ENCODE measurements at regions of chrX and their contacts with region 1.

Region 1: DNA sequence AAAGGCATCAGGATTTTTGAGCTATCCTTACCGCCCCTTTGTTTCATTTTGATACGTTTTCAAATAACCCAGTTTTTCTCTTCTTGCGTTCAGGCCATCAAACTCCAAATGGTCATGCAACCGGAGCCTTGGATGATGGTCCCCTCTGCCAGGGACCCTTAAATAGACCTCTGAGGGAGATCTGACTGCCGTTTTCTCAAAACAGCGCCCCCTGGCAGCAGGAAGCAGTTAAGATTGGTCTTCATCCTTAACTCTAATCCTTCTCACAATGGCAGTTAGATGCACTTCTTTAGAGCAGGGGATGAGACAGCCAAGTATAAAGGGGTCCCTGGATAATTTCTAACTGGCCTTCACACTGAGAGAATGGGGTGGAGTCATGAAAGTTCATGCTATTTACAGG is 525.0 kb upstream of the SPANXN1 start:
- DNase-seq: no peak
- ATAC-seq: no peak
- H3K4me3 ChIP-seq: no peak overlapping the region
- H3K27ac ChIP-seq: no peak overlapping the region
- H3K4me1 ChIP-seq: no peaks in the 10 kb centered on the region
- H3K27me3 ChIP-seq: no peaks in the 10 kb centered on the region

Region 2: DNA sequence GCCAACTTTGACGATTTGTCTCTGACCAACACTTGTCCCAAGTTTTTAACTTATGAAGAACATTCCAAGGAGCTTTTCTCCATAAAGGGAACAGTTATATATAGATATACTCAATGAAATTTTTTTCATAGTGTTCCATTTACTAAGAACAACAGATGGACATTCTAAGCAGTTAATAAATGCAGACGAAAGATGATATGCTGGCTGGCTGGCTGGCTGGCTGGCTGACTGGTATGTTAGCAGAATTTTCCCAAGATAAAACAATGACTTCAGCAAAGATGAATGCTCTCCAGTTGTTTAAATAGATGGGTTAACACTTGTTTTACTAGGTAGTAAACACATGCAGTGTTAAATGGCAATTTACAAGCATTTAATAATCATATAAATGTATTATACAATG is 1267.3 kb before region 1 on chrX:
- intact Hi-C with region 1: loop called in 1 of 2 experiments (anchors 10 kb)
- DNase-seq: no peak
- ATAC-seq: no peak
- H3K4me3 ChIP-seq: no peak overlapping the region
- H3K27ac ChIP-seq: no peak overlapping the region
- H3K4me1 ChIP-seq: no peaks in the 10 kb centered on the region
- H3K27me3 ChIP-seq: no peaks in the 10 kb centered on the region